Activated naive CD8-positive, alpha-beta T cell treated with anti-CD3 and anti-CD28 coated beads, Interleukin-2, amount 10 ng/mL, durations not matched to agents 7 days and 5 days (primary cell): ENCODE measurements at regions of chr7 and their contacts with region 1.

Region 1: DNA sequence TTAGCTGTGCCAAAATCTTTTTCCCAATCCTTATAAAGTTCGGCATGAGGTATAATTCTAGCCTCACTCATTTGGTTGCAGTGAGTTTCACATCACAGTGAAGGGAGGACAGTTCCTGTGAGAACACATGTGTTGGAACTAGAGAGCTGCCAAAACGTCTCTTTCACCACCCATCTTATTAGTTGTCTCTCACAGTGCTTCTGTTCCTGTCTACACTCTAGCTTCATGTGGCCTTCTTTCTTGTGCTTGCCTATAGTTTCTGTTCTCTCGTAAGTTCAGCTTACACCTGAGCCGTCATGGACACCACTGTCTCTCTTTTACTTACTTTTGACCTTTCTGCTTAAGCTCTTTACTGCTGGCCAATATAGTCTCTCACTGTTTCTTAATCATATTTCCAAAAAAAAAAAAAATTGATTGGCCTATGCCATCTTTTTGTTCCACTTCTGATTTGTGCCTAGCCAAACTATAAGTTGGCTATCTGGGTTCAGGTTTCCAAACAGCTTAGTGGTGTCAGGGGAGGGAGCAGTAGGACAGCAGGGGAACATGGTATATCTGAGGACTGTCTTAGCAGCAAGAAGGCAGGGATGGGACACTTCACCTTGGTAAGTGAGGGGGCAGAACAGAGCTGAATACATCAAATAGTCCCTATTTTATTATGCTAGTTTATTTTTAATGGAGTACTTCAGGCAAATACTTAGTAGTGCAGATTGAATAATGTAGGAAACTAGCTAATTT is 38.0 kb downstream of the ZNRF2 start:
- DNase-seq: no peak
- ATAC-seq: peak; percentile 80
- H3K4me3 Mint-ChIP-seq: peak overlapping the region; percentile 87
- H3K27ac Mint-ChIP-seq: peak overlapping the region; percentile 98
- H3K4me1 Mint-ChIP-seq: peaks cover 37% of the 10 kb centered on the region
- H3K27me3 Mint-ChIP-seq: no peaks in the 10 kb centered on the region

Region 2: GRCh38 chr7:30252885-30253795 is 69.3 kb before region 1 on chr7:
- POLR2A ChIA-PET with region 1: no interaction called
- DNase-seq: no peak
- ATAC-seq: no peak
- H3K4me3 Mint-ChIP-seq: no peak overlapping the region
- H3K27ac Mint-ChIP-seq: no peak overlapping the region
- H3K4me1 Mint-ChIP-seq: peaks cover 12% of the 10 kb centered on the region
- H3K27me3 Mint-ChIP-seq: no peaks in the 10 kb centered on the region

Region 3: DNA sequence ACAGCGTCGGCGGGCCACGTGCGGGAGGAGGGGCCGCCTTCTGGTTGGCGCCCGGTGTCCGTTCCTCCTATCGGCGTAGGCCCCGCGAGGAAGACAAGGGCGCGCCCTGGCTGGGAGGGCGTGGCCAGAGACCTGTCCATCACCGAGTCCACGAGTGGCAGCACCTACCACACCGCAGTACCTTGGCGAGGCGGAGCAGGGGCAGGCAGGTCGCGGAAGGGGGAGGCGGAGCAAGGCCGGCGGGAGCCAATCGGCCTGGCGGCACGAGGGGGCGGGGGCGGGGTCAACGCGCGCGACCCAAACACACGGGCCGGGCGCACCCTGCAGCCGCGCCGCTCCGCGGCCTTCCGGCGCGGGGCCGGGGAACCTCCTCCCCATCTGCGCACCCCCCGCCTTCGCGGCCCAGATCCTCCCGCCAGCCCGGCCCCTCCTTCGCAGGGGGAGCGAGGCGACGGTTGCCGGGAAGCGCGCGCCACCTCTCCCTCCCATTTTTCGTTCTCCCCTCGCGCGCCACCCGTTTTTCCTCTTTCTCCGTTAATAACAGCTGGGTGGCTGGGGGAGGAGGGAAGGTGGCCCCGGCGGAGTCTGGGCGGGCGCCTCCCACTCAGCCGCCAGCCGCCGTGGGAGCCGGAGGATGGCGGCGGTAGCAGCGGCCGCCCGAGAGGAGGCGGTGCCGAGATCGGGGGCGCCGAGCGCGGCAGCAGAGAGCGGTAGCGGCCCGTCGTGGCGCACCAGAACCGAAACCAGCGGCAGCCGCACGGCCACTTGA is 38.0 kb before region 1 on chr7 and contains the start of gene ZNRF2:
- POLR2A ChIA-PET with region 1: interaction called, 30 read pairs
- DNase-seq: peak; percentile 97
- ATAC-seq: peak; percentile 89
- H3K4me3 Mint-ChIP-seq: peak within 1 kb of the TSS; percentile 84
- H3K27ac Mint-ChIP-seq: peak within 1 kb of the TSS; percentile 86
- H3K4me1 Mint-ChIP-seq: peaks cover 38% of the 10 kb centered on the region
- H3K27me3 Mint-ChIP-seq: peaks cover 2% of the 10 kb centered on the region
- total RNA-seq, gene ZNRF2: 27.1 to 28.0 TPM

Region 4: DNA sequence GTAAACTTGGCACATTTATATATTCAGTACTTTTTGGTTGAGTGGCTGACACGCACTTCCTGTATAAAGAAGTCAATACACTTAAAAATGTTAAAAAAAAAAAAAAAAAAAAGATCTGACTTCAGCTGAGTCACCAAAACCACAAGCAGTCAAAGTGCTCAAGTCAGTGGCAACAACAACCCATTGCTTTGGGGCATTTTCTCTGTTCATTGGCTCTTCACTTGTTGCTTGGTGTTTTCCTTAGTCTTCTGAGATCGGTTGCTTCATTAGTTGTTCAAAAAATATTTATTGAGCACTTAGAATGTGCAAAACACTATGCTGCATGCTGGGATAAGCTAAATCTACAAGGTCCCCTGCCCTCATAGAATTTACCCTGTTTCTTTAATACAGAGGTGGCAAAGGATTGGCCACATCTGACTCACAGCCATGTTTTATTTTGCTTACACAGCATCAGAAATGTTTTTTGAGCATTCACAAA is 25.7 kb after region 1 on chr7:
- POLR2A ChIA-PET with region 1: interaction called, 10 read pairs
- DNase-seq: no peak
- ATAC-seq: peak; percentile 88
- H3K4me3 Mint-ChIP-seq: peak overlapping the region; percentile 68
- H3K27ac Mint-ChIP-seq: peak overlapping the region; percentile 85
- H3K4me1 Mint-ChIP-seq: peaks cover 42% of the 10 kb centered on the region
- H3K27me3 Mint-ChIP-seq: no peaks in the 10 kb centered on the region

Region 5: DNA sequence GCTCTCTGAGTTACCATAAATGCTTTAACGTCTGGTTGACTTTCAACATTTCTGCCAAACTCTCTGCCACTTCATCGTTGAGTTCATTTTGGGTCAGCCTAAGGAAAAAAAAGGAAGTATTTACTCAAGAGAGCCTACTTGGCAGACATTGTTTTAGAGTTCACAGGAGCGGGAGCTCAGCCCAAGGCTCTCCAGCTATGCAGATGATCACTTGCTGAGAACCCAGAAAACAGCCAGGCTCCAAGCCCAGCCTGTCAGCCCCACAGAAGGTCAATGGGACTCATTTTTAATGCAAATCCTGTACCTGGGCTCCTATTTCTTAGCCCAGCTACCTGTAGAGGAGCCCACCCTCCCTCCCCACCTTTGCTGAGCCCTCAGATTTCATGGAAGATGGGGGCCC is 110.6 kb after region 1 on chr7:
- POLR2A ChIA-PET with region 1: no interaction called
- DNase-seq: no peak
- ATAC-seq: no peak
- H3K4me3 Mint-ChIP-seq: no peak overlapping the region
- H3K27ac Mint-ChIP-seq: no peak overlapping the region
- H3K4me1 Mint-ChIP-seq: peaks cover 7% of the 10 kb centered on the region
- H3K27me3 Mint-ChIP-seq: no peaks in the 10 kb centered on the region

Region 6: DNA sequence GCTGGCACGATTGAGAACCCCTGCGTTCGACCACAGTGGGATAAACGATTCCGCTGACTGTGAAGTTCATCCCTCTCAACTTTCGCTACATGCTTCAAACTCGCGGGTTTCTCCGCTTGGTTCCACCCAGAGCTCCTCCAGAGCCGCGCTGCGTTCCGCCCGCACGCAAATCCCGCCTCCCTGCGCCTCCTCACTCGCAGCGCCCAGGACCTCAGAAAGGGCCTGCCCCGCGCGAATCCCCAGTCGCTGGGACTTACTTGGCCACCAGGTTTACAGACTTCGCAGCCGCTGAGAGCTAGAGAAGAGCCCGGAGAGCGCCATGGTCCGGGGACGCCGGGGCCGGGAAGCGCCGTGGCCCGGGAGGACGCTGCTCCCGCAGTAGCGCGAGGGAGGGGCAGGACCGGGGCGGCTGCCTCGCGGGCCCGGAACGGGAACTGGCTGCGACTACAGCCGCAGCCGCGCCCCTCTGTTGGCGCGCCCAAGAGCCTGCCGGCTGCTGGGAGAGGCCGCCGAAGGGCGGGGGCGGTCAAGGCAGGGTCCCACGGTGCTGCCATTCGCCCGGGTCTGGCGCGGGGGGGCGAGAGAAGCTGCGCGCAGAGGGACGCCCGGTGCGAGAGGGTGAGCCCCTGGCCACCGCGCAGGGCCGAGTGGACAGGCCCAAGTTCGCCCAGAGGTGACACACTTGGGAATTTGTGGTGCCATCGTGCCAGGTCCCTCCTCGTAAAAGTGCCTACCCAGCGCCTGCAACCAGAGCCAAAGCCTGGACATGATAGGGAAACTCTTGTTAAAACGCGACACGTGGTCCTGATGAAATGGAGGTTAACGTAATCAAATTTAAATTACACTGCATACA is 156.1 kb after region 1 on chr7 and contains the start of gene NOD1:
- POLR2A ChIA-PET with region 1: interaction called, 10 read pairs
- DNase-seq: peak; percentile 82
- ATAC-seq: peak; percentile 91
- H3K4me3 Mint-ChIP-seq: peak within 1 kb of the TSS; percentile 94
- H3K27ac Mint-ChIP-seq: no peak within 1 kb of the TSS
- H3K4me1 Mint-ChIP-seq: peaks cover 39% of the 10 kb centered on the region
- H3K27me3 Mint-ChIP-seq: no peaks in the 10 kb centered on the region
- total RNA-seq, gene NOD1: 26.8 to 28.2 TPM